K562 (cell line): ENCODE measurements at regions of chr10 and their contacts with region 1.

Region 1: GRCh38 chr10:102596506-102596971 is 47.7 kb upstream of the TRIM8 start:
- DNase-seq: peak; percentile 57 to 72 (median 61)
- ATAC-seq: peak; percentile 78
- H3K4me3 ChIP-seq: no peak overlapping the region
- H3K27ac ChIP-seq: peak overlapping the region; percentile 26; the same call in 1 of the 3 replicates
- H3K4me1 ChIP-seq: peaks cover 34 to 39% of the 10 kb centered on the region in 2 experiments
- H3K27me3 ChIP-seq: no peaks in the 10 kb centered on the region
- CTCF ChIP-seq: peak; percentile 78 to 85 (median 84)
- EP300 ChIP-seq: no peak
- POLR2A ChIP-seq: no peak
- RAD21 ChIP-seq: peak; percentile 47 to 75; a peak in 3 of 4 replicates

Region 2: DNA sequence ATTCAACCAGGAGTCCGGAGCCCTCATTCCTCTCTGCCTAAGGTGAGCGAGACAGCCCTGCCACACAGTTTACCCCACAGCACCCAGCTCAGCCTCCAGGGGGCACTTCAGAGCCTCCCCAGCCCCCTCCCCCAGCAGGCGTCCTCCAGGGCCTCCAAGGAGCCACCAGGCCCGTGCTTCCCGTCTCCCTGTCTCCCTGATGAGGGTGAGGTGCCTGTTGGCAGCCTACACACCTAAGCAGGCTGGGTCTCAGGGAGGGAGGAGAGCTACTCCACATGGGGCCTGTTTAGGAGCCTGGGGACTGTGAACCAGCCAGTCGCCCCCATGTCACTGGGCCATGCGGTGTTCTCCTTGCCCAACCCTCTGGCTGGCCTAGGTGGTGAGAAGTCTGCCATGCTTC is 18.8 kb after region 1 on chr10:
- CTCF ChIA-PET with region 1: no interaction called
- POLR2A ChIA-PET with region 1: interaction called, 10 read pairs
- in situ Hi-C with region 1: no loop called
- intact Hi-C with region 1: no loop called
- DNase-seq: peak; percentile 63 to 70 (median 66)
- ATAC-seq: peak; percentile 96
- H3K4me3 ChIP-seq: no peak overlapping the region
- H3K27ac ChIP-seq: no peak overlapping the region; the same call in 2 of the 3 replicates
- H3K4me1 ChIP-seq: peaks cover 0 to 33% of the 10 kb centered on the region in 2 experiments; a peak in 4 of 5 replicates
- H3K27me3 ChIP-seq: no peaks in the 10 kb centered on the region
- CTCF ChIP-seq: peak; percentile 52 to 65 (median 59)
- EP300 ChIP-seq: no peak
- POLR2A ChIP-seq: no peak
- RAD21 ChIP-seq: peak in 1 of 2 experiments; percentile 56; a peak in 2 of 4 replicates